IMR-90 (cell line): ENCODE measurements at regions of chr3 and their contacts with region 1.

Region 1: DNA sequence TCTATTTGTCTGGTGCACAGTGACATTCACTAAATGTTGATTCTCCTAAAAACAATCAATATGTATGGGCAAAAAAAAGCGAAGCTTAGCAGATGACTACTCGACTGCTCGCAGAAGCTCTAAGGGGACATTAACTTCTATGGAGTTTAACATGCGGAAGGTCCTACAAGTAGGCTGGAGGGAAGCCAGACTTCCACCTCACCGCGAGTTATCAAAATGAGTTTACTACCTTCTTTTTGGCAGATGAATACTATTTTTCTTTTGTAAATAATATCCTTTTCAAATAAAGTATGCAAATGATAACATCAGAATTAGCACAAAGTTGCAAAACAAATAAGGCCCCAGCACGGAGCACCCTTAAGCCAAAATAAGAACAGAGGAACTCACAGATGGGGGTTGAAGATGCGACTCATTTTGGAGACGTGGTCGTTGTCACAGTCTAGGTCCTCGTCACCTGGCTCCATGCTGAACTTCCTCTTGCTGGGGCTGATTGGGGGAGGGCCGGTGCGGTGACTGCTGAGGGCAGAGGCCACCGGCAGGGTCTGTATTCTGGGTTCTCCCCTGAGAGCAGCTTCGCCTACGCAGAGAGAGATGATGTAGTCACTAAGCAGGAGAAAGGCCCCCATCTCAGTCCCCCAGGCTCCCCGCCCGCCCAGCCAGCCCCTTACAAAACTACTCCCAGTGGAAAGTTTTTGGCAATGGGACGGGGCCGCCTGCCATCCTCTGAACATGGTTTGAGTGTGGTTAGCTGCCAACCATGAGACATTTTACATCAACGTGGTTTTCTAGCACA is 42.1 kb downstream of the VGLL4 start:
- DNase-seq: peak; percentile 39
- ATAC-seq: no peak
- H3K4me3 ChIP-seq: no peak overlapping the region
- H3K27ac ChIP-seq: peak overlapping the region; percentile 88
- H3K4me1 ChIP-seq: peaks cover 30% of the 10 kb centered on the region
- H3K27me3 ChIP-seq: no peaks in the 10 kb centered on the region
- CTCF ChIP-seq: no peak
- POLR2A ChIP-seq: no peak; the same call in 1 of the 2 replicates
- RAD21 ChIP-seq: no peak

Region 2: GRCh38 chr3:11509173-11510000 is 92.3 kb before region 1 on chr3:
- CTCF ChIA-PET with region 1: no interaction called
- POLR2A ChIA-PET with region 1: no interaction called
- dilution Hi-C with region 1: no loop called
- in situ Hi-C with region 1: no loop called
- intact Hi-C with region 1: loop called (anchors 1 kb)
- DNase-seq: peak; percentile 96
- ATAC-seq: peak; percentile 91
- H3K4me3 ChIP-seq: no peak overlapping the region
- H3K27ac ChIP-seq: peak overlapping the region; percentile 93; the same call in 1 of the 2 replicates
- H3K4me1 ChIP-seq: peaks cover 22% of the 10 kb centered on the region
- H3K27me3 ChIP-seq: no peaks in the 10 kb centered on the region
- CTCF ChIP-seq: no peak; the same call in 1 of the 2 replicates
- POLR2A ChIP-seq: peak; percentile 45; the same call in 1 of the 2 replicates
- RAD21 ChIP-seq: peak; percentile 34

Region 3: GRCh38 chr3:11582191-11582968 is 19.3 kb before region 1 on chr3:
- CTCF ChIA-PET with region 1: no interaction called
- POLR2A ChIA-PET with region 1: no interaction called
- dilution Hi-C with region 1: no loop called
- in situ Hi-C with region 1: no loop called
- intact Hi-C with region 1: loop called (anchors 1 kb)
- DNase-seq: peak; percentile 89
- ATAC-seq: peak; percentile 83
- H3K4me3 ChIP-seq: peak overlapping the region; percentile 23
- H3K27ac ChIP-seq: peak overlapping the region; percentile 84
- H3K4me1 ChIP-seq: peaks cover 28% of the 10 kb centered on the region
- H3K27me3 ChIP-seq: no peaks in the 10 kb centered on the region
- CTCF ChIP-seq: no peak
- POLR2A ChIP-seq: no peak
- RAD21 ChIP-seq: no peak

Region 4: GRCh38 chr3:11944052-11944673 is 342.5 kb after region 1 on chr3:
- CTCF ChIA-PET with region 1: no interaction called
- POLR2A ChIA-PET with region 1: no interaction called
- dilution Hi-C with region 1: no loop called
- in situ Hi-C with region 1: no loop called
- intact Hi-C with region 1: no loop called
- DNase-seq: peak; percentile 10
- ATAC-seq: peak; percentile 77
- H3K4me3 ChIP-seq: no peak overlapping the region
- H3K27ac ChIP-seq: no peak overlapping the region
- H3K4me1 ChIP-seq: no peaks in the 10 kb centered on the region
- H3K27me3 ChIP-seq: no peaks in the 10 kb centered on the region; the same call in 1 of the 2 replicates
- CTCF ChIP-seq: peak; percentile 43
- POLR2A ChIP-seq: no peak
- RAD21 ChIP-seq: no peak